ENCODE measurements at regions of chr6 and their contacts with region 1.

Region 1: DNA sequence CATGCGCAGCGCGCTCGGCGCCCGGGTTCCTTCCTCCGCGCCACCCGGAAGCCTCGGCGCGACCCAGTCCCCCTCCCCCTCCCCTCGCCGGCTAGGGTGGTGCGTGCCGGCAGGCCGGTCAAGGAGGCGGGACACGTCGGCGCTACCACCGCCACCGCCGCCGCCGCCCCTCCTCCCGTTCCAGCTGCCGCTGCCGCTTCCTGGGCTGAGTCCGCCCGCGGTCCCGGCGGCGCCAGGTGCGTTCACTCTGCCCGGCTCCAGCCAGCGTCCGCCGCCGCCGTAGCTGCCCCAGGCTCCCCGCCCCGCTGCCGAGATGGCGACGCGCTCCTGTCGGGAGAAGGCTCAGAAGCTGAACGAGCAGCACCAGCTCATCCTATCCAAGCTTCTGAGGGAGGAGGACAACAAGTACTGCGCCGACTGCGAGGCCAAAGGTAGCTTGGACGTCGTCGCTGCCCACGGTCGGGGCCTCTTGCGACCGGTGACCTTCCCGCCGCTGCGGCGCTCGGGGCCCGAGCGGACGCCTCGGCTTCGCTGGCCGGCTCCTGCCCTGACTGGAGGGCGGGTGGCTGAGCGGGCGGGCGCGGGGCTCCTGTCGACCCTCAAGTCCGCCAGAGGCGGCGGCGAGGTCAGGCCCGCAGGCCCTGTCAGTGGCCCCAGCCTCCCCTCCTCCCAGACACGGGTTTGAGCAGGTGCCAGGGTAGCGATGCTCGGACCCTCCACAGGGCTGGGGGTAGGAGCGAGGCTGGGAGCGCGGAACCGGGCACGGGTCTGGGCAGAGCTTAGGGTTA is at the start of gene SMAP1:
- DNase-seq: peak; percentile 79
- ATAC-seq: peak; percentile 93
- H3K4me3 ChIP-seq: peak within 1 kb of the TSS; percentile 67 to 73
- H3K27ac ChIP-seq: peak within 1 kb of the TSS; percentile 93
- H3K4me1 ChIP-seq: peaks cover 5 to 23% of the 10 kb centered on the region in 2 experiments; a peak in 2 of 4 replicates
- H3K27me3 ChIP-seq: no peaks in the 10 kb centered on the region
- CTCF ChIP-seq: no peak
- POLR2A ChIP-seq: no peak
- RAD21 ChIP-seq: no peak
- total RNA-seq, gene SMAP1: 3.5 TPM

Region 2: GRCh38 chr6:70210462-70210861 is 457.4 kb before region 1 on chr6:
- CTCF ChIA-PET with region 1: no interaction called
- POLR2A ChIA-PET with region 1: no interaction called
- RAD21 ChIA-PET with region 1: no interaction called
- intact Hi-C with region 1: no loop called
- DNase-seq: no peak
- ATAC-seq: peak; percentile 59; the same call in 1 of the 2 replicates
- H3K4me3 ChIP-seq: no peak overlapping the region
- H3K27ac ChIP-seq: no peak overlapping the region
- H3K4me1 ChIP-seq: no peaks in the 10 kb centered on the region
- H3K27me3 ChIP-seq: peaks cover 71% of the 10 kb centered on the region
- CTCF ChIP-seq: peak; percentile 6 to 40 (median 21); a peak in 3 of 6 replicates
- POLR2A ChIP-seq: no peak
- RAD21 ChIP-seq: no peak

Region 3: GRCh38 chr6:70566751-70567382 is 101.0 kb before region 1 on chr6 and contains the start of gene SDHAF4:
- CTCF ChIA-PET with region 1: no interaction called
- POLR2A ChIA-PET with region 1: no interaction called
- RAD21 ChIA-PET with region 1: no interaction called
- intact Hi-C with region 1: loop called (anchors 5 kb)
- DNase-seq: peak; percentile 63
- ATAC-seq: peak; percentile 98
- H3K4me3 ChIP-seq: peak within 1 kb of the TSS; percentile 85 to 87
- H3K27ac ChIP-seq: peak within 1 kb of the TSS; percentile 61
- H3K4me1 ChIP-seq: peaks cover 0 to 13% of the 10 kb centered on the region in 2 experiments; a peak in 2 of 4 replicates
- H3K27me3 ChIP-seq: no peaks in the 10 kb centered on the region
- CTCF ChIP-seq: no peak
- POLR2A ChIP-seq: peak; percentile 93
- RAD21 ChIP-seq: no peak
- total RNA-seq, gene SDHAF4: 8.9 TPM

Region 4: DNA sequence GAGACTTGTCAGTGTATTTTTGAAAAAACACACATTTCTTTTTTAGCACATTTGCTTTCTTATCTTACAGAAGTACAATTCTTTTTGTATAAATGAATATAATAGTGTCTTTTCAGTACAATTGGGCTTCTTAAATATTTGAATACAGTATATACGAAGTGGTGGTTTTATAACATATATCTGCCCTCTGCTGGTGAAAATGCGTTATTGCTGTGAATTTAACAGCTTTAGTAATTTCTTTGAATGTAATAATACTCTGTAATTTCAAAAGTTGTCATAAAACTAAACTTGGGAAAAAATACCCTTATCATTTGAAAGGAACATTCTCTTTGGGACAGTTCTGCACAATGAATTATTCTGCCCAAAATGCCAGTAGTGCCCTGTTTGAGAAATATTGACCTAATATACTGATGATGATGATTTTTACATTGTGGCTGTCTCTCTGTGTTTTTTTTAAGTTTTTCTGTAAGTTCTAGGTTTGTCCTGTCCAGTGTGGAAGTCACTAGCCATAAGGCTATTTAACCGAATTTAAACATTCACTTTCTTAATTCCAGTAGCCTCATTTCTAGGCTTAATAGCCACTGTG is 18.7 kb after region 1 on chr6:
- CTCF ChIA-PET with region 1: interaction called, 13 read pairs
- POLR2A ChIA-PET with region 1: interaction called, 3 read pairs
- RAD21 ChIA-PET with region 1: no interaction called
- intact Hi-C with region 1: no loop called
- DNase-seq: no peak
- ATAC-seq: peak; percentile 62; the same call in 1 of the 2 replicates
- H3K4me3 ChIP-seq: no peak overlapping the region
- H3K27ac ChIP-seq: no peak overlapping the region
- H3K4me1 ChIP-seq: peaks cover 0 to 4% of the 10 kb centered on the region in 2 experiments; a peak in 1 of 4 replicates
- H3K27me3 ChIP-seq: no peaks in the 10 kb centered on the region
- CTCF ChIP-seq: peak; percentile 45 to 78 (median 58); a peak in 4 of 6 replicates
- POLR2A ChIP-seq: no peak
- RAD21 ChIP-seq: peak; percentile 65